CD8-positive, alpha-beta T cell (primary cell): ENCODE measurements at regions of chr7 and their contacts with region 1.

Region 1: GRCh38 chr7:23055582-23056178 is 41.8 kb upstream of the HYCC1 start:
- DNase-seq: peak; percentile 18 to 80 (median 50)
- ATAC-seq: peak; percentile 96
- H3K4me3 ChIP-seq: no peak overlapping the region
- H3K4me3 Mint-ChIP-seq: no peak overlapping the region
- H3K27ac ChIP-seq: no peak overlapping the region
- H3K27ac Mint-ChIP-seq: no peak overlapping the region
- H3K4me1 ChIP-seq: no peaks in the 10 kb centered on the region
- H3K4me1 Mint-ChIP-seq: no peaks in the 10 kb centered on the region
- H3K27me3 ChIP-seq: no peaks in the 10 kb centered on the region
- H3K27me3 Mint-ChIP-seq: no peaks in the 10 kb centered on the region
- CTCF ChIP-seq: peak; percentile 99

Region 2: GRCh38 chr7:22110227-22110839 is 945.3 kb before region 1 on chr7:
- CTCF ChIA-PET with region 1: interaction called, 16 read pairs
- POLR2A ChIA-PET with region 1: no interaction called
- intact Hi-C with region 1: loop called (anchors 5 to 10 kb)
- DNase-seq: peak; percentile 33 to 84 (median 58)
- ATAC-seq: peak; percentile 75
- H3K4me3 ChIP-seq: no peak overlapping the region
- H3K4me3 Mint-ChIP-seq: no peak overlapping the region
- H3K27ac ChIP-seq: no peak overlapping the region
- H3K27ac Mint-ChIP-seq: no peak overlapping the region
- H3K4me1 ChIP-seq: no peaks in the 10 kb centered on the region
- H3K4me1 Mint-ChIP-seq: no peaks in the 10 kb centered on the region
- H3K27me3 ChIP-seq: no peaks in the 10 kb centered on the region
- H3K27me3 Mint-ChIP-seq: no peaks in the 10 kb centered on the region
- CTCF ChIP-seq: peak; percentile 81

Region 3: GRCh38 chr7:22726345-22727185 is 329.1 kb before region 1 on chr7:
- CTCF ChIA-PET with region 1: interaction called, 9 read pairs
- POLR2A ChIA-PET with region 1: no interaction called
- intact Hi-C with region 1: loop called in 1 of 2 experiments (anchors 2 kb)
- DNase-seq: peak in 7 of 9 experiments; percentile 6 to 64 (median 38)
- ATAC-seq: peak; percentile 83
- H3K4me3 ChIP-seq: no peak overlapping the region
- H3K4me3 Mint-ChIP-seq: peak overlapping the region; percentile 64
- H3K27ac ChIP-seq: no peak overlapping the region
- H3K27ac Mint-ChIP-seq: no peak overlapping the region
- H3K4me1 ChIP-seq: peaks cover 9% of the 10 kb centered on the region
- H3K4me1 Mint-ChIP-seq: peaks cover 22% of the 10 kb centered on the region
- H3K27me3 ChIP-seq: peaks cover 0 to 14% of the 10 kb centered on the region in 2 experiments
- H3K27me3 Mint-ChIP-seq: peaks cover 33% of the 10 kb centered on the region
- CTCF ChIP-seq: no peak

Region 4: DNA sequence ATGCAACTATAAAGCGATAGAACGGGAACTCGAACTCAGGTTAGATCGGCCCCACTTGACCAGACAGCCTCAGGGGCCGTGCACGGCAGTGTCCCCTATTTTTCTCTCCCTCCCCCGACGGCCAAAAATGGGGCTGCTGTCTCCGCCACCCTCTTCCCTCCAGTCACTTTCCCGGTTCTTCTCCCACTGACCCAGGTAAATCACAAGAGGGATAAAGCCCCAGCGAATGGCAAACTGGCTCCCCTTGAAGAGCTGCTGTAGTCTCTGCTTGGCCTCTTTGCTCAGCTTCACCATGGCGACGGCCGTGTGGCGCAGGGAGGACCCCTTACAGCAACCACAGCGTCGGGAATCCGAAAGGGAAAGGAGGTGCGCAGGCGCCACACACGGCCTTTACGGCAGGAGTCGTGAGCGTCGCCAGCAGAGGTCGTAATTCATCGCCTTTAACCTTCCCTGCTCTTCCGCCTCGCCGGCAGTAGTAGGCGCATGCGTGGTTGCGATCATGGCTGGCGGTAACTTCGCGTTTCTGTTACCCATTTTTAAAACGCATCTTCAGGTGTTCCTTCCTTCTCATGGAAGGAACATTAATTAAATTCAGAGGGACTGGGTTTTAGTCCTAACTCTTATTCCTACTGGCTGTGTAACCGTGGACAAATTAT is 233.1 kb before region 1 on chr7 and contains the start of gene TOMM7:
- CTCF ChIA-PET with region 1: interaction called, 4 read pairs
- POLR2A ChIA-PET with region 1: no interaction called
- intact Hi-C with region 1: loop called in 1 of 2 experiments (anchors 1 kb)
- DNase-seq: peak; percentile 72 to 99 (median 86)
- ATAC-seq: peak; percentile 96
- H3K4me3 ChIP-seq: peak within 1 kb of the TSS; percentile 74 to 89
- H3K4me3 Mint-ChIP-seq: peak within 1 kb of the TSS; percentile 99
- H3K27ac ChIP-seq: peak within 1 kb of the TSS; percentile 85
- H3K27ac Mint-ChIP-seq: peak within 1 kb of the TSS; percentile 99
- H3K4me1 ChIP-seq: peaks cover 20% of the 10 kb centered on the region
- H3K4me1 Mint-ChIP-seq: peaks cover 41% of the 10 kb centered on the region
- H3K27me3 ChIP-seq: no peaks in the 10 kb centered on the region
- H3K27me3 Mint-ChIP-seq: peaks cover 4% of the 10 kb centered on the region
- CTCF ChIP-seq: no peak
- total RNA-seq, gene TOMM7: 595 to 610 TPM

Region 5: GRCh38 chr7:22932896-22933295 is 122.8 kb before region 1 on chr7:
- CTCF ChIA-PET with region 1: interaction called, 4 read pairs
- POLR2A ChIA-PET with region 1: no interaction called
- intact Hi-C with region 1: loop called in 1 of 2 experiments (anchors 1 kb)
- DNase-seq: no peak
- ATAC-seq: no peak
- H3K4me3 ChIP-seq: no peak overlapping the region
- H3K4me3 Mint-ChIP-seq: no peak overlapping the region
- H3K27ac ChIP-seq: no peak overlapping the region
- H3K27ac Mint-ChIP-seq: no peak overlapping the region
- H3K4me1 ChIP-seq: no peaks in the 10 kb centered on the region
- H3K4me1 Mint-ChIP-seq: no peaks in the 10 kb centered on the region
- H3K27me3 ChIP-seq: no peaks in the 10 kb centered on the region
- H3K27me3 Mint-ChIP-seq: peaks cover 6% of the 10 kb centered on the region
- CTCF ChIP-seq: no peak

Region 6: DNA sequence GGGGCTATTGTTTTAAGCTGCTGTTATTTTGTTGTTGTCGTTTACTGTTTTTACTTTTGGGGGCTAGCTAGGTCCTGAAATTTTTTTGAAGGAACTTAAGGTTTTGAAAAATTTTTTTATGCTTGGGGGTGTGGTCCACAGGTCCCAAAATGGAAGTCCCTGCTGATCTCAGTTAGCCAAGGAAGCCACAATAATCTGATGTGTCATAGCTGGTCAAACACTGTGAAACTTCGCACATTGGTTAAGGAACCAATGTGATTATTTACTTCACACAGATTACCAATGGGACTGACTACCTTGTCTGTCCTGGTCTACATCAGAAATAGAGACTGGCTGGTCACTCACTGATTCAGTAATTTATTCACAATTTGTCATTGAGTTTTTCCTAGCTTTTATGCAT is 12.2 kb before region 1 on chr7:
- CTCF ChIA-PET with region 1: interaction called, 16 read pairs
- POLR2A ChIA-PET with region 1: interaction called, 4 read pairs
- intact Hi-C with region 1: no loop called
- DNase-seq: no peak
- ATAC-seq: no peak
- H3K4me3 ChIP-seq: no peak overlapping the region
- H3K4me3 Mint-ChIP-seq: no peak overlapping the region
- H3K27ac ChIP-seq: no peak overlapping the region
- H3K27ac Mint-ChIP-seq: no peak overlapping the region
- H3K4me1 ChIP-seq: no peaks in the 10 kb centered on the region
- H3K4me1 Mint-ChIP-seq: no peaks in the 10 kb centered on the region
- H3K27me3 ChIP-seq: no peaks in the 10 kb centered on the region
- H3K27me3 Mint-ChIP-seq: no peaks in the 10 kb centered on the region
- CTCF ChIP-seq: no peak

Region 7: DNA sequence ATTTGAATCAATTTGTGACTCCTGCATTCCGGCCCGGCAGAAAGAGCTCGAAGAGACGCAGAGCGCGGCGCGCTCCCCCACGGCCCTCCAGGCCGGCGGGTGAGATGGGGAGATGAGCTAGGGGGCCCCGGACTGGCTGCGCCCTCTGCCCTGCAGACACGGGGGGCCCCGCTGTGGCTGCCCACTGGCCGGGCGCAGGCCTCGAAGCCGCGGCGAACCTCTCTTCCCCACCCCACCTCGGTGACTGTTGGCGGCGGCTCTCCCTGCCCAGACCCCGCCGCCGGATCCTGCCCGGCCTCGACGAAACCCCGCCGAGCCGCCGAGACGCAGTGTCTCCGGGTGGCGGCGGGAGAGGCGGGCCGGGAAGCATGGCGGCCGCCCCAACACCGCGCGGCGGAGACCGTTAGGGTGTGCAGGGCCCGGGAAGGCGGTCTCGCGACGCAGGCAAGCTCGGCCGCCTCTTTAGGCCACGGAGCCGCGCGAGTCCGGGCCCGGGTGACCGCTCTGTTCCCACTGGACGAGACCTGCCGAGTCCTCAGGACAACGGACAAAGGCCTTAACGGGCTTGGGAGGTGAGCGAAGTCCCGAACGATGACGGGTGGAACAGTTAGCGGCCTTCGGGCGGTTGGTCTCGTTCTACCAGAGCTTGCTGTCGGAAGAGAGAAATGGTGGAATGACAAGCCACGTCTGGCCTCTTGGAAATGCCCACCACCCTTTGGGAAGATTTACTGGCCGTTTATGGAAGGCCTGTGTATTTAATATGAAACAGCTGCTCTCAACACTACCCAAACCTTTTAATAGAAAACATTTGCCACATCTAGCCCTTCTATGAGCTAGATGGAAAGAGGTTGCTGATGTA is 150.5 kb after region 1 on chr7:
- CTCF ChIA-PET with region 1: no interaction called
- POLR2A ChIA-PET with region 1: no interaction called
- intact Hi-C with region 1: no loop called
- DNase-seq: peak in 3 of 9 experiments; percentile 5 to 28 (median 21)
- ATAC-seq: peak; percentile 74
- H3K4me3 ChIP-seq: no peak overlapping the region
- H3K4me3 Mint-ChIP-seq: peak overlapping the region; percentile 55
- H3K27ac ChIP-seq: peak overlapping the region in 1 of 2 experiments; percentile 18
- H3K27ac Mint-ChIP-seq: peak overlapping the region; percentile 81
- H3K4me1 ChIP-seq: no peaks in the 10 kb centered on the region
- H3K4me1 Mint-ChIP-seq: peaks cover 9% of the 10 kb centered on the region
- H3K27me3 ChIP-seq: no peaks in the 10 kb centered on the region
- H3K27me3 Mint-ChIP-seq: peaks cover 24% of the 10 kb centered on the region
- CTCF ChIP-seq: no peak

Region 8: GRCh38 chr7:23234569-23235296 is 179.1 kb after region 1 on chr7:
- CTCF ChIA-PET with region 1: no interaction called
- POLR2A ChIA-PET with region 1: no interaction called
- intact Hi-C with region 1: no loop called
- DNase-seq: peak in 1 of 9 experiments; percentile 12
- ATAC-seq: no peak
- H3K4me3 ChIP-seq: no peak overlapping the region
- H3K4me3 Mint-ChIP-seq: peak overlapping the region; percentile 19
- H3K27ac ChIP-seq: no peak overlapping the region
- H3K27ac Mint-ChIP-seq: no peak overlapping the region
- H3K4me1 ChIP-seq: no peaks in the 10 kb centered on the region
- H3K4me1 Mint-ChIP-seq: peaks cover 3% of the 10 kb centered on the region
- H3K27me3 ChIP-seq: no peaks in the 10 kb centered on the region
- H3K27me3 Mint-ChIP-seq: no peaks in the 10 kb centered on the region
- CTCF ChIP-seq: no peak